BJ (cell line): ENCODE measurements at regions of chr6 and their contacts with region 1.

Region 1: GRCh38 chr6:70210462-70210861 is 92.4 kb downstream of the COL9A1 start:
- DNase-seq: no peak
- H3K4me3 ChIP-seq: no peak overlapping the region
- H3K27me3 ChIP-seq: peaks cover 2% of the 10 kb centered on the region; the same call in 1 of the 2 replicates
- CTCF ChIP-seq: peak; percentile 26; the same call in 1 of the 2 replicates

Region 2: DNA sequence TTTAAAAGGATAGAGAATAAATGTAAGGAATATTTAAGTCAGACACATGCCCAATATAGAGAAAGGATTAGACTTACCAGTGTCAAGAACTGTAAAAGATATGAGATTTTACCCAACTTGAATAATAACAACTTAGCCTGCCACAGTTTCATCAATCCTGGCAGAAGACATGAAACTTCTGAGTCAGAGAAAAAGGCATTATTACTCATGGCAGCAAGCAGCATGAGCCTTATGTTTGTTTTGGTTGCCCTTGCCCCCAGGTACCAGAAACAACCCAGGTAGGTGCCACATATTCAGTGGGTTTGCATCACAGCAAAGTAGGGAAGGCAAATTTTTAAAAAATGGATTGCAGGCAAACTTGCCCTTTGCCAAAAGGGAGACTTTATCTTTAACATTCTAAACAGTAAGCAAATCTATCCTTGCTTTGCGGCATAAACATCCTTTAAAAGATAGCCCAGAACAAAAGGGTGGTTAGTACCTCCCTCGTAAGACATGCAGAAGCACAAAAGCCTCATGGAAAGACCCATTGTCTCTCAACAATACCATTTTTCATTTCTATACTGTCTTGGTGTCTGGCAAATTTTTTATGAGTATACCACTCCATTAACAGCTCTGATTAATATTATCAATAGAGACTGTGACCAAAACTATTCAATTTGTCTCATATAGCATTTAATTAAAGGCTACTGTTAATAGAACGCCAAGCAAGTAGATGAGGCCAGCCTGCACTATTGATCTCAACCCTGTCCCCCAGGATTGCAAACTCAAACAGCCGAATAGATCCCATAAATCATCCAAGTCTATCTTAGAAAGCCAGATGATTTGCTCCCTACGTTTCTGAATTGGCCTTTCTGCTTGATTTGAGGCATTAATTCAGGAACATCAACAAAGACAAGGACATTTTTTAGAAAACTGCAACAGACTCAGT is 159.0 kb before region 1 on chr6:
- CTCF ChIA-PET with region 1: no interaction called
- POLR2A ChIA-PET with region 1: interaction called, 14 read pairs
- DNase-seq: no peak
- H3K4me3 ChIP-seq: no peak overlapping the region
- H3K27me3 ChIP-seq: no peaks in the 10 kb centered on the region
- CTCF ChIP-seq: no peak

Region 3: DNA sequence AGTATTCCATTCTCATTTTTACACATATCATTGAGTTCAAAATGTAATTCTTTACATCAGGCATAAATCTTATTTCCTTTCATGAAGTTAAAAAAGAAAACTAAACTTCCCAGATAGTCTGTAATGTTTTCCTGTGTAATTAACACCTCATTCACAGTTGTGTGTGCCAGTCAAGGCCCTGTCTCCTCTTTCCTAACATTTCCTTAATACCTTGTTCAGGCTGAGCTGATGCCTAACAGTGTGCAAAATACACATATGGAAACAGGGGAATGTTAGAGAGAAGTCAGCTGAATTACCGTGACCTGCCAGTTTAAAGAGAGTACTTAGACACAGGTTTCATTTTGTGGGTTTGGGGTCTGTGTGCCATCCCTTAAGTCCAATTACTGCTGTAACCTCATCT is 116.3 kb before region 1 on chr6:
- CTCF ChIA-PET with region 1: no interaction called
- POLR2A ChIA-PET with region 1: no interaction called
- DNase-seq: no peak
- H3K4me3 ChIP-seq: no peak overlapping the region
- H3K27me3 ChIP-seq: no peaks in the 10 kb centered on the region
- CTCF ChIP-seq: no peak

Region 4: GRCh38 chr6:70183538-70183937 is 26.9 kb before region 1 on chr6:
- CTCF ChIA-PET with region 1: no interaction called
- POLR2A ChIA-PET with region 1: no interaction called
- DNase-seq: no peak
- H3K4me3 ChIP-seq: no peak overlapping the region
- H3K27me3 ChIP-seq: no peaks in the 10 kb centered on the region
- CTCF ChIP-seq: no peak

Region 5: GRCh38 chr6:70196531-70196930 is 13.9 kb before region 1 on chr6:
- CTCF ChIA-PET with region 1: no interaction called
- POLR2A ChIA-PET with region 1: no interaction called
- DNase-seq: no peak
- H3K4me3 ChIP-seq: no peak overlapping the region
- H3K27me3 ChIP-seq: no peaks in the 10 kb centered on the region
- CTCF ChIP-seq: no peak